ENCODE measurements at regions of chr1 and their contacts with region 1.

Region 1: DNA sequence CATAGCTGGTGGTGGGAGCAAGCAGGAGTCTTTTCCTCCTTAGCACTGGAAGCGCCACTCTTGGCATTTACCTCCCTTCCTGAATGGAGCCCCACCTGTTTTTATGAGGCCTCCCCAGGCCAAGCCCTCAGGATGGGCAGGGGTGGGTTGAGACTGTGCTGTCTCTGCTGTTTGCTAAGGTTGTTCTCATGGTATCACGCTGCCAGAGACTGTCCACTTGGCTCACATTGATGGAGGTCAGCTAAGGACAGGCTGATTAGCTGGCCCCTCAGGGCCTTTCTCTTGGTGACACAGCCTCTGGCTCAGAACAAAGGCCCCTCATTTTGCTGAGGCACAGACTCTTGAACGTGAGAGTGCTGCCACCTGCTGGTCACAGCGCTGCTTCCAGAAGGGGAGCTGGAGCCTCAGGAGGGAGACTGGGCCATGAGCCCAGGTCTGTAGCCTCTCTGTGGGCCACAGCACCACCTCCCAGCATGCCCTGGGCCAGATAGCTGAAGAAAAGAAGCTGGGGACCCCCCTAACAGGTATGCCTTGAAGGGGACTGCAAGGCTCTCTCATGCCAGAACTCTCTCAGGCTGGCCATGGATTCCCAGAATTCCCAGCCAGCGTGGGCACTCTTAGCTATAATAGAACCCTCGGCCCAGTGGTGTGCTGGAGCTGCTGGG is 85.6 kb downstream of the CD58 start:
- DNase-seq: peak; percentile 84
- ATAC-seq: peak; percentile 91
- H3K4me3 ChIP-seq: no peak overlapping the region
- H3K4me3 Mint-ChIP-seq: no peak overlapping the region
- H3K27ac ChIP-seq: no peak overlapping the region
- H3K27ac Mint-ChIP-seq: peak overlapping the region; percentile 56
- H3K4me1 ChIP-seq: peaks cover 0 to 3% of the 10 kb centered on the region in 2 donors
- H3K4me1 Mint-ChIP-seq: peaks cover 3% of the 10 kb centered on the region
- H3K27me3 ChIP-seq: no peaks in the 10 kb centered on the region
- H3K27me3 Mint-ChIP-seq: no peaks in the 10 kb centered on the region
- CTCF ChIP-seq: peak; percentile 93

Region 2: GRCh38 chr1:116133696-116134650 is 351.2 kb before region 1 on chr1:
- CTCF ChIA-PET with region 1: interaction called, 578 read pairs
- POLR2A ChIA-PET with region 1: no interaction called
- intact Hi-C with region 1: loop called (anchors 1 kb)
- DNase-seq: no peak
- ATAC-seq: no peak
- H3K4me3 ChIP-seq: no peak overlapping the region
- H3K4me3 Mint-ChIP-seq: no peak overlapping the region
- H3K27ac ChIP-seq: no peak overlapping the region
- H3K27ac Mint-ChIP-seq: no peak overlapping the region
- H3K4me1 ChIP-seq: no peaks in the 10 kb centered on the region
- H3K4me1 Mint-ChIP-seq: peaks cover 2% of the 10 kb centered on the region
- H3K27me3 ChIP-seq: peaks cover 0 to 10% (median 1%) of the 10 kb centered on the region in 4 experiments
- H3K27me3 Mint-ChIP-seq: peaks cover 17% of the 10 kb centered on the region
- CTCF ChIP-seq: no peak

Region 3: DNA sequence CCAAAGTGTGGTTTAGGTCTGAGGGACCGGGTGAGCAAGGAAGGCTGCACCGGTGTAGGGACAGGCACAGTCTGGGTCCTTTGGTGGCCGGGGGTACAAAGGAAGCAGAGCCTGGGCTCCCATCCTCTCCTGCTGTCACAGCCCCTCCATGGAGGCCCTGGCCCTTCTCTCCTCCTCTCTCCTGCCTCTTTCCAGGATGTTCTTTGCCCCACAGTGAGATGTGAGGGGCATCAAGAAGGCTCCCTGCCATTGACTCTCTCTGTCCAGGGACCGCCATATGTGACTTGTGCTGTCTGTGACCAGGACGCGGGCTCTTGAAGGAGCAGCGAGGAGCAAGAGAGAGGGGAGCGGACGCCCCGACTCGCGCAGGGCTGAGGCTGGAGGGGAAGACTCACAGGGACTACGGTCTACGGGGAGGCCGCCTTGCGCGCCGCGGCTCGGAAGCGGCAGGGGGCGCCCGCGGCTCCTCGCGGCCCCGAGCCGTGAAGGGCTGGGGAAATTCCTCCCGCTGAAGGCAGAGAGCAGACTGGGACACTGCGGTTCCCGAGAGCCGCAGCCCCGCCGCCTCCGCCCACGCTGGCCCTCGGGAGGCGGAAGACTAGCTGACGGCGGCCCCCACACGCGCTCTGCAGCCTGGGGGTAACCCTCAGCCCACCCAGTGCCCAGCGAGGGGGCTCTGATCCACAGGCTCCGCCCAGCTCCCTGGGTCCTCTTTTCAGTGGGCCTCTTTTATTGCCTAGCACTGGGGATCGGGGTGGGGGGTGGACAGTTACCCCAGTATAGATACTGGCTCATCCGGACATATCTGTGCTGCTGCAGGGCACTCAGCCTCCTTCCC is 333.2 kb before region 1 on chr1:
- CTCF ChIA-PET with region 1: interaction called, 578 read pairs
- POLR2A ChIA-PET with region 1: no interaction called
- intact Hi-C with region 1: loop called (anchors 1 kb)
- DNase-seq: peak; percentile 86
- ATAC-seq: peak; percentile 98
- H3K4me3 ChIP-seq: peak overlapping the region in 4 of 5 experiments; percentile 17 to 44 (median 41)
- H3K4me3 Mint-ChIP-seq: peak overlapping the region; percentile 65
- H3K27ac ChIP-seq: no peak overlapping the region
- H3K27ac Mint-ChIP-seq: no peak overlapping the region
- H3K4me1 ChIP-seq: peaks cover 7 to 11% of the 10 kb centered on the region in 2 donors
- H3K4me1 Mint-ChIP-seq: peaks cover 8% of the 10 kb centered on the region
- H3K27me3 ChIP-seq: no peaks in the 10 kb centered on the region
- H3K27me3 Mint-ChIP-seq: peaks cover 15% of the 10 kb centered on the region
- CTCF ChIP-seq: peak; percentile 90

Region 4: GRCh38 chr1:116257341-116257767 is 227.8 kb before region 1 on chr1:
- CTCF ChIA-PET with region 1: no interaction called
- POLR2A ChIA-PET with region 1: no interaction called
- intact Hi-C with region 1: no loop called
- DNase-seq: no peak
- ATAC-seq: no peak
- H3K4me3 ChIP-seq: no peak overlapping the region
- H3K4me3 Mint-ChIP-seq: no peak overlapping the region
- H3K27ac ChIP-seq: no peak overlapping the region
- H3K27ac Mint-ChIP-seq: no peak overlapping the region
- H3K4me1 ChIP-seq: peaks cover 0 to 7% of the 10 kb centered on the region in 2 donors
- H3K4me1 Mint-ChIP-seq: peaks cover 15% of the 10 kb centered on the region
- H3K27me3 ChIP-seq: no peaks in the 10 kb centered on the region
- H3K27me3 Mint-ChIP-seq: peaks cover 11% of the 10 kb centered on the region
- CTCF ChIP-seq: no peak

Region 5: GRCh38 chr1:116418091-116418830 is 66.9 kb before region 1 on chr1:
- CTCF ChIA-PET with region 1: interaction called, 13 read pairs
- POLR2A ChIA-PET with region 1: no interaction called
- intact Hi-C with region 1: no loop called
- DNase-seq: peak; percentile 92
- ATAC-seq: peak; percentile 95
- H3K4me3 ChIP-seq: peak overlapping the region; percentile 66 to 86 (median 84)
- H3K4me3 Mint-ChIP-seq: peak overlapping the region; percentile 86
- H3K27ac ChIP-seq: peak overlapping the region; percentile 62 to 80
- H3K27ac Mint-ChIP-seq: peak overlapping the region; percentile 91
- H3K4me1 ChIP-seq: peaks cover 16 to 20% of the 10 kb centered on the region in 2 donors
- H3K4me1 Mint-ChIP-seq: peaks cover 26% of the 10 kb centered on the region
- H3K27me3 ChIP-seq: no peaks in the 10 kb centered on the region
- H3K27me3 Mint-ChIP-seq: peaks cover 4% of the 10 kb centered on the region
- CTCF ChIP-seq: no peak

Region 6: DNA sequence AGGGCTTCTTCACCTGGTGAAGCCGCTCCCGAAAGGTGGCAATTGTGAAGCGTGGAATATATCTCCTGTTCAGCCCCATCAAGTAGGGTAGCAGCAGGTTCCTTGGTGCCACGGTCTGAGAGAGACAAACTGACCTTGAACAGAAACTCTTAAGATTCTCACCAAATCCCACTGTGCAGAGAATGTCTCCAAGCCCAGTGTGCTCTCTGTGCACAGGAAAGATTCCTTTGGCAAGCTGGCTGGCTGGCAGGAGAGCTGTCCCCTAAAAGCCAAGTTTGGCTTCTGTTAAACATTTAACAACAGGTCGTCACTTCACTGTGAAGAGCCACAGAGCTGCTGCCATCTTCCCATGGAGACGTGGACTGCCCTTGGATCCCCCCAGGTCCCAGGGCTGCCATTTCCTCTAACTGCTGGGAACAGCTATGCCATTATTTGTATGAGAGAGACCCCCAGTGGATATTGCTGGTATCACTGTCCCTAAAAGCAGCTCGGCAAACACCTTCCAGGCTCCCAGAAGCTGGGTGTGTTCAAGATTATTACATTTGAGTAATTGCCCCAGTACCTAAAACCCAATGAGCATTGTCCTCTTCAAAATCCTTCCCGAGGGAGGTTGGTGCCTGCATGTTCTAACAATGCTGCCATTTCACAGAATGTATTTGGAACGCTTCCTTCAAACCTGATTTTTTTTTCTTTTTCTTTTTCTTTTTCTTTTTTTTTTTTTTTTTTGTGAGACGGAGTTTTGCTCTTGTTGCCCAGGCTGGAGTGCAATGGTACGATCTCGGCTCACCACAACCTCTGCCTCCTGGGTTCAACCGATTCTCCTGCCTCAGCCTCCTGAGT is 13.8 kb after region 1 on chr1:
- CTCF ChIA-PET with region 1: interaction called, 115 read pairs
- POLR2A ChIA-PET with region 1: no interaction called
- intact Hi-C with region 1: loop called (anchors 2 kb)
- DNase-seq: peak; percentile 65
- ATAC-seq: peak; percentile 76
- H3K4me3 ChIP-seq: no peak overlapping the region
- H3K4me3 Mint-ChIP-seq: no peak overlapping the region
- H3K27ac ChIP-seq: no peak overlapping the region
- H3K27ac Mint-ChIP-seq: no peak overlapping the region
- H3K4me1 ChIP-seq: peaks cover 14 to 16% of the 10 kb centered on the region in 2 donors
- H3K4me1 Mint-ChIP-seq: peaks cover 23% of the 10 kb centered on the region
- H3K27me3 ChIP-seq: no peaks in the 10 kb centered on the region
- H3K27me3 Mint-ChIP-seq: no peaks in the 10 kb centered on the region
- CTCF ChIP-seq: peak; percentile 80

Region 7: GRCh38 chr1:116514708-116515525 is 29.7 kb after region 1 on chr1:
- CTCF ChIA-PET with region 1: interaction called, 10 read pairs
- POLR2A ChIA-PET with region 1: no interaction called
- intact Hi-C with region 1: no loop called
- DNase-seq: peak; percentile 67
- ATAC-seq: peak; percentile 71
- H3K4me3 ChIP-seq: peak overlapping the region in 3 of 5 experiments; percentile 1 to 47 (median 9)
- H3K4me3 Mint-ChIP-seq: peak overlapping the region; percentile 83
- H3K27ac ChIP-seq: peak overlapping the region; percentile 72 to 86
- H3K27ac Mint-ChIP-seq: peak overlapping the region; percentile 96
- H3K4me1 ChIP-seq: peaks cover 20 to 26% of the 10 kb centered on the region in 2 donors
- H3K4me1 Mint-ChIP-seq: peaks cover 47% of the 10 kb centered on the region
- H3K27me3 ChIP-seq: no peaks in the 10 kb centered on the region
- H3K27me3 Mint-ChIP-seq: no peaks in the 10 kb centered on the region
- CTCF ChIP-seq: no peak